WTC11 (cell line): ENCODE measurements at regions of chr7 and their contacts with region 1.

Region 1: GRCh38 chr7:100889761-100890634 is 483 bp upstream of the UFSP1 start:
- DNase-seq: peak; percentile 92
- ATAC-seq: peak; percentile 82
- H3K4me3 Mint-ChIP-seq: peak overlapping the region; percentile 88
- H3K27ac Mint-ChIP-seq: peak overlapping the region; percentile 97
- H3K4me1 Mint-ChIP-seq: peaks cover 41% of the 10 kb centered on the region
- H3K27me3 Mint-ChIP-seq: peaks cover 5% of the 10 kb centered on the region
- CTCF ChIP-seq: no peak

Region 2: GRCh38 chr7:100803398-100804233 is 86.4 kb before region 1 on chr7:
- CTCF ChIA-PET with region 1: interaction called, 19 read pairs
- POLR2A ChIA-PET with region 1: interaction called, 3 read pairs
- DNase-seq: peak; percentile 59
- ATAC-seq: peak; percentile 21
- H3K4me3 Mint-ChIP-seq: no peak overlapping the region
- H3K27ac Mint-ChIP-seq: peak overlapping the region; percentile 83
- H3K4me1 Mint-ChIP-seq: peaks cover 24% of the 10 kb centered on the region
- H3K27me3 Mint-ChIP-seq: no peaks in the 10 kb centered on the region
- CTCF ChIP-seq: no peak

Region 3: DNA sequence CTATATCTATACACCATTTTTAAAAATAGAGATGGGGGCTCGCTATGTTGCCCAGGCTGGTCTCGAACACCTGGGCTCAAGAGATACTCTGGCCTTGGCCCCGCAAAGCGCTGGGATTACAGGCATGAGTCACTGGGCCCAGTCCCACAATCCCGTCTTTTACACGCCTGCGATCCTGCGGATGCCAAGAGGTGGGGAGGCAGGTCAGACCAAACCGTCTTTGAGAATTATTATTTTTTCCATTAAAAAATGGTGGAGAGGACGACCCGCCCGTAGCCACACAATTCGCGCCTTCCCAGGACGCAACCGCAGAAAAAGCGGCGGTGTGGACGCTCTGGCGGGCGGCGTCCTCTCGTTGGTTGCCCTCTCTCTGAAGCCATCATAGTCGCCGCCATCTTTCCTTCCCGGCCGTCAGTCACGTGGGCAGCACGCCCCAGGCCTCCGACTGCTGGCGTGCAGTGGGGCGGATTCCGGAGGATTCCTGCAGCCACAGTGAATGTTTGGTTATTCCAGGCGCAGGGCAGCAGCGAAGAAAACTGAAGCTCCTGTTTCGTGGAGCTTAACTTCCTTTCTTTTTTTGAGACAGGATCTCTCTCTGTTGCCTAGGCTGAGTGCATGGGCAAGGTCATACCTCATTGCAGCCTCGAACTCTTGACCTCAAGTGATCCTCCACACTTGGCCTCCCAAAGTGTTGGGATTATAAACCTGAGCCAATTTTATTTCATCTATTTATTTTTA is 52.7 kb before region 1 on chr7:
- CTCF ChIA-PET with region 1: no interaction called
- POLR2A ChIA-PET with region 1: interaction called, 10 read pairs
- DNase-seq: peak; percentile 93
- ATAC-seq: peak; percentile 36
- H3K4me3 Mint-ChIP-seq: peak overlapping the region; percentile 77
- H3K27ac Mint-ChIP-seq: peak overlapping the region; percentile 100
- H3K4me1 Mint-ChIP-seq: peaks cover 37% of the 10 kb centered on the region
- H3K27me3 Mint-ChIP-seq: no peaks in the 10 kb centered on the region
- CTCF ChIP-seq: no peak

Region 4: DNA sequence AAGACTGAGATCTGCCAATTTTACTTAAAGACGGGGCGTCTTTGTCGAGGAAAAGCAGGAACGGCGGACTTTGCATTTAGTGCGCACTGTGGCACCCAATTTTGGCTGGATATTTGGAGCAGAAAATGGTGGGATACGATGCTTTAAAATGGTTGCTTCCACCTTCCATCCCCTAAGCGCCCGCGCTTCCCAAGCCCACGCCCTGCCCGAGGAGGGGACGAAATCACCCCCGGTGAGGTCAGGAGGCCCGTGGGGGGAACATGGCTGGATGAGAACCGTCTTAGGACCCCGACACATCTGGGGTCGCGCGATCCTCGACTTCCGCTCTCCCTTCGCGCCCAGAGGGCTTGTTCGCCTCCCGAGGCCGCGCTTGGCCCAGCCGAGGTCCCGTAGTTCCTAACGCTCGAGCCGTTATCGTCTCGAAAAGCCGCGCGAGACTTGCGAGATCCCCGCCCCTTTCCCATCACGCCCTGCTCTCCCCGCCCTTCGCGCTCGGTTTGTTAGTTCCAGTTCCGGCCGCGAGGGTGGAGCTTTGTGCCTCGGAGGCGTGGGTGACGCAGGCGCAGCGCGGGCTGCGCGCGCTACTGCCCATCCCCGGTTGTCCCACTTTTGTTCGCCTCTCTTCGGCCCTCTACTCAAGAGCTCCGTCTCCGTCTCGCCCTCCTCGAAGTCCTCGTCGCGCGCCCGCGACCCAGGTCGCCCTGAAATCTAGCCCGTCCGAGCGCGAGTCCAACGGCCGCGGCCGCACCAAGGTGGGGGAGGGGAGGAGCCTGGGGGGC is 15.2 kb before region 1 on chr7 and contains the start of gene SRRT:
- CTCF ChIA-PET with region 1: interaction called, 10 read pairs
- POLR2A ChIA-PET with region 1: interaction called, 71 read pairs
- DNase-seq: peak; percentile 98
- ATAC-seq: peak; percentile 94
- H3K4me3 Mint-ChIP-seq: peak within 1 kb of the TSS; percentile 98
- H3K27ac Mint-ChIP-seq: peak within 1 kb of the TSS; percentile 99
- H3K4me1 Mint-ChIP-seq: peaks cover 19% of the 10 kb centered on the region
- H3K27me3 Mint-ChIP-seq: no peaks in the 10 kb centered on the region
- CTCF ChIP-seq: no peak
- total RNA-seq, gene SRRT: 209 to 238 TPM (median 233 TPM) in 3 replicates

Region 5: GRCh38 chr7:100921039-100921438 is 31.0 kb after region 1 on chr7:
- CTCF ChIA-PET with region 1: no interaction called
- POLR2A ChIA-PET with region 1: no interaction called
- DNase-seq: no peak
- ATAC-seq: peak; percentile 32; the same call in 1 of the 2 replicates
- H3K4me3 Mint-ChIP-seq: no peak overlapping the region
- H3K27ac Mint-ChIP-seq: no peak overlapping the region
- H3K4me1 Mint-ChIP-seq: peaks cover 36% of the 10 kb centered on the region
- H3K27me3 Mint-ChIP-seq: no peaks in the 10 kb centered on the region
- CTCF ChIP-seq: no peak

Region 6: GRCh38 chr7:100965723-100966541 is 75.9 kb after region 1 on chr7:
- CTCF ChIA-PET with region 1: interaction called, 26 read pairs
- POLR2A ChIA-PET with region 1: interaction called, 6 read pairs
- DNase-seq: peak; percentile 99
- ATAC-seq: peak; percentile 93
- H3K4me3 Mint-ChIP-seq: peak overlapping the region; percentile 94
- H3K27ac Mint-ChIP-seq: peak overlapping the region; percentile 94
- H3K4me1 Mint-ChIP-seq: peaks cover 39% of the 10 kb centered on the region
- H3K27me3 Mint-ChIP-seq: peaks cover 30% of the 10 kb centered on the region
- CTCF ChIP-seq: peak; percentile 90

Region 7: GRCh38 chr7:101077303-101078089 is 187.5 kb after region 1 on chr7:
- CTCF ChIA-PET with region 1: interaction called, 24 read pairs
- POLR2A ChIA-PET with region 1: interaction called, 6 read pairs
- DNase-seq: peak; percentile 96
- ATAC-seq: peak; percentile 99
- H3K4me3 Mint-ChIP-seq: no peak overlapping the region
- H3K27ac Mint-ChIP-seq: no peak overlapping the region
- H3K4me1 Mint-ChIP-seq: peaks cover 8% of the 10 kb centered on the region; the same call in 1 of the 2 replicates
- H3K27me3 Mint-ChIP-seq: no peaks in the 10 kb centered on the region
- CTCF ChIP-seq: peak; percentile 90

Region 8: GRCh38 chr7:101153969-101154692 is 264.1 kb after region 1 on chr7 and contains the start of gene AP1S1:
- CTCF ChIA-PET with region 1: interaction called, 3 read pairs
- POLR2A ChIA-PET with region 1: interaction called, 13 read pairs
- DNase-seq: peak; percentile 98
- ATAC-seq: peak; percentile 91
- H3K4me3 Mint-ChIP-seq: peak within 1 kb of the TSS; percentile 80
- H3K27ac Mint-ChIP-seq: peak within 1 kb of the TSS; percentile 37; the same call in 1 of the 2 replicates
- H3K4me1 Mint-ChIP-seq: peaks cover 28% of the 10 kb centered on the region
- H3K27me3 Mint-ChIP-seq: peaks cover 18% of the 10 kb centered on the region
- CTCF ChIP-seq: no peak
- total RNA-seq, gene AP1S1: 60.7 to 80.0 TPM (median 78.2 TPM) in 3 replicates